Sciatic nerve (tissue), 2 donors: ENCODE measurements at regions of chr6 and their contacts with region 1.

Region 1: DNA sequence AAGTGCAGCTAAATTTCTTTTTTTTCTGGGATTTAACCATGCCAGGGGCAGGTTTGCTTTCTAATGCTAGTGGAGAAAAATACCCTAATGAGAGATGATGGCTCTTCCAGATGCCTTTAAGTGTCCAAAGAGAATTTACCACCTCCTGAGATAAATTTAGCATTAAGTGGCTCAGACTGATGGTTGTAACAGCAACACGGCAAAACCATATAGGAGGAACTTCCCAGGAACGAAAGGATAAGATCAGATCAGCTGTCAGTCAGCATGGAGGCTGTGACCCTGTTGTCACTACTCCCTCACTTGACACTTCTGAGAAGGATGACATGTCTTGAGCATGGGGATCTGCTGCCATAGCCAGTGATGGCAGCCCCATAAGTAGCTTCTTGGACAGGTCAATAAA is 860.0 kb downstream of the QKI start:
- DNase-seq: no peak
- ATAC-seq: no peak

Region 2: GRCh38 chr6:164252948-164253347 is 21.5 kb before region 1 on chr6:
- intact Hi-C with region 1: loop called (anchors 1 kb)
- DNase-seq: no peak
- ATAC-seq: no peak